ENCODE measurements at regions of chr17 and their contacts with region 1.

Region 1: DNA sequence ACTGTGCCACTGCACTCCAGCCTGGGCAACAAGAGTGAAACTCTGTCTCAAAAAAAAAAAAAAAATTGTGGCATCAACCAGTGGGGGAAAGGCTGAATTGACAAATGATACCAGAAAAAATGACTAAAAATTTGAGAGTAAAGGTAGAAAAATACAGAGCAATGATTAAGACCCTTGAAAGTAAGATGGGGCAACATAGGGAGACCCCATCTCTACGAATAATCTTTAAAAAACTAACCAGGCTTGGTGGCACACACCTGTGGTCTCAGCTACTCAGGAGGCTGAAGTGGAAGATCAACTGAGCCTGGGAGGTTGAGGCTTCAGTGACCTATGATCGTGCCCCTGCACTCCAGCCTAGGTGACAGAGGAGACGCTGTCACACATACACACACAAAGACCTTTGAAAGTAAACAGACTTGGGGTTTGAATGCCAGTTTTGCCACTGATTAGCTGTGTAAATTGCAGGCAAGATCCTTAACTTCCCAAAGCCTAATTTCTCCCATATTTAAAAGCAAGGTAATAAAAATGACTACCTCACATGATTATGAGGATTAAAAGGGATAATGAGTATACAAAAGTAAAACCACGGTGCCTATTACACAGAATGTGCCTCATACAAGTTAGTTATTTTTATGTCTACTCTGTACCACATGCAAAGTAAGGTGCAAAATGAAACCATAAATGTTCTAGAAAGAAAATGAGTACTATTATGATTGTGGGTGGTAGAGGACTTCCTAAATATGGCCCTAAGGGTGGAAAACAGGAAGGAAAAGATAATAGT is 21.7 kb upstream of the PAFAH1B1 start:
- DNase-seq: no peak
- H3K4me3 ChIP-seq: no peak overlapping the region
- H3K27ac ChIP-seq: no peak overlapping the region
- H3K27me3 ChIP-seq: no peaks in the 10 kb centered on the region
- CTCF ChIP-seq: no peak

Region 2: DNA sequence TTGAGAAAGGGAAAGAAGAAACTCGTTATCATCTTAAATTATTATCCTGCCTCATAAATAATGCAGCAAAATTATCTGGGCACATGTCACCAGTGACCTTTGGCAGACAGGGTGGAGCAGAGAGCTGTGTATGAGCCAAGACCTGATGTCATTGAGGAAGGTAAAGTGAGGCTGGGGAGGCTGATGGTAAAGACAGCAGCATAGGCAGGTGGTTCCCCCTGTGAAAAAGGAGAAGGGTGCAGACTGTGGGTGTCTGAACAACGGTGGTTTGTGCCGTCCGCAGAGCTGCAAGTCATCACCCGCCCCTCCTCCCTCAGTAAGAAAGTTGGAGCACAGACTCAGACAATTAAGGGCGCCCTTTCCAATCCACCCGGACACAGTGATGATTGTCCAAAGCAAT is 29.3 kb before region 1 on chr17:
- intact Hi-C with region 1: loop called in 1 of 2 experiments (anchors 5 kb)
- DNase-seq: peak in 3 of 10 donors; percentile 16 to 44 (median 18)
- H3K4me3 ChIP-seq: peak overlapping the region in 19 of 59 donors; percentile 11 to 42 (median 20)
- H3K27ac ChIP-seq: peak overlapping the region in 26 of 59 donors; percentile 5 to 80 (median 54)
- H3K27me3 ChIP-seq: no peaks in the 10 kb centered on the region
- CTCF ChIP-seq: peak in 2 of 56 donors; percentile 9 to 14

Region 3: DNA sequence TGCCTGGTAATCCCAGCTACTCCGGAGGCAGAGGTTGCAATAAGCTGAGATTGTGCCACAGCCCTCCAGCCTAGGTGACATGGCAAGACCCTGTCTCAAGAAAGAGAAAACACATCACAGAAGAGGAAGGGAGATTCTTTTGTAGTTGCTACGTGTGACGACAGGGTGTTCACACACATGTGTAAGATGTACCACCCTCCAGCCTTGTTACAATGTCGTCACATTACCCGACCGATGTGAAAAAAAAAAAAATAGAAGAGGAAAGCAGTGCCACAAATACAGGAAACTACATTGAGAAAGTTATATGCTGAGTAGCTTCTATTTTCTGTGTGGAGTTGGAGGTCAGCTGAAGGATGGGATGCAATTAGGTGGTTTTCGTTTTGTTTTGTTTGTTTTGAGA is 83.8 kb after region 1 on chr17:
- intact Hi-C with region 1: loop called in 1 of 2 experiments (anchors 2 kb)
- DNase-seq: no peak
- H3K4me3 ChIP-seq: no peak overlapping the region
- H3K27ac ChIP-seq: no peak overlapping the region
- H3K27me3 ChIP-seq: no peaks in the 10 kb centered on the region
- CTCF ChIP-seq: no peak